Activated CD8-positive, alpha-beta T cell treated with anti-CD3 and anti-CD28 coated beads for 36 hours (primary cell): ENCODE measurements at regions of chr1 and their contacts with region 1.

Region 1: DNA sequence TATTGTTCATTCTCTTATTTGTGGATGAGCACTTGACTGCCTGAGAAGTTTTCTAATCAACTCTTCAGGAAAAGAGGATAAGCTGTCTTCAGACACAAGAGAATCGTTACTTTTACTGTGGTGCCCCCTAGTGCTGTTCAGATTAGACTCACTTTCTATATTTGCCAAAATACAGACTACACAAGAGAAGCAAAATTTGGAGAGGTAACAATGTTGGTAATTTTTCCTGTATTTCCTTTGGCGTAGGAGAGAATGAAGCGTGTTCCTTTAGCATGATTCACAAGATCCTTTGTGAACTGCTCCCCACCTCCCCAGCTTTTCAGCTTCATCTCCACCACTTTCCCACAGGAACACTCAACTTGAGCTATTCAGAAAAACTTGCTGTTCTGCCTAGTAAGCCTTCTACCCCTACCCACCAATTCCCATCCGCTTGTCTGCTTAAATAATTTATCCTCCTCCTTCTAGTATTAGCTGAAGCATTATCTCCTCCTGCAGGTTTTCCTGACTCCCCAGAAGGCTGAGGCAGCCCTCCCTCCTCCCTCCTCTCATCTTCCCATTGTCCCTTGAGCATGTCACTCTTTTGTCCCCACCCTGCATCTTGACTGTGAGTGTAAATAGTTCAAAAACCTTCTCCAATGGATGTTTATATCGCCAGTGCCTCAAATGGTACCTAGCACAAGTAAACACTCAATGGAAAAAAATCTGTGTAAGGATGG is 4.5 kb downstream of the TNFSF4 start:
- DNase-seq: peak; percentile 26
- ATAC-seq: no peak
- H3K4me3 Mint-ChIP-seq: no peak overlapping the region
- H3K27ac Mint-ChIP-seq: no peak overlapping the region
- H3K4me1 Mint-ChIP-seq: peaks cover 45% of the 10 kb centered on the region
- H3K27me3 Mint-ChIP-seq: no peaks in the 10 kb centered on the region
- CTCF ChIP-seq: peak; percentile 84

Region 2: DNA sequence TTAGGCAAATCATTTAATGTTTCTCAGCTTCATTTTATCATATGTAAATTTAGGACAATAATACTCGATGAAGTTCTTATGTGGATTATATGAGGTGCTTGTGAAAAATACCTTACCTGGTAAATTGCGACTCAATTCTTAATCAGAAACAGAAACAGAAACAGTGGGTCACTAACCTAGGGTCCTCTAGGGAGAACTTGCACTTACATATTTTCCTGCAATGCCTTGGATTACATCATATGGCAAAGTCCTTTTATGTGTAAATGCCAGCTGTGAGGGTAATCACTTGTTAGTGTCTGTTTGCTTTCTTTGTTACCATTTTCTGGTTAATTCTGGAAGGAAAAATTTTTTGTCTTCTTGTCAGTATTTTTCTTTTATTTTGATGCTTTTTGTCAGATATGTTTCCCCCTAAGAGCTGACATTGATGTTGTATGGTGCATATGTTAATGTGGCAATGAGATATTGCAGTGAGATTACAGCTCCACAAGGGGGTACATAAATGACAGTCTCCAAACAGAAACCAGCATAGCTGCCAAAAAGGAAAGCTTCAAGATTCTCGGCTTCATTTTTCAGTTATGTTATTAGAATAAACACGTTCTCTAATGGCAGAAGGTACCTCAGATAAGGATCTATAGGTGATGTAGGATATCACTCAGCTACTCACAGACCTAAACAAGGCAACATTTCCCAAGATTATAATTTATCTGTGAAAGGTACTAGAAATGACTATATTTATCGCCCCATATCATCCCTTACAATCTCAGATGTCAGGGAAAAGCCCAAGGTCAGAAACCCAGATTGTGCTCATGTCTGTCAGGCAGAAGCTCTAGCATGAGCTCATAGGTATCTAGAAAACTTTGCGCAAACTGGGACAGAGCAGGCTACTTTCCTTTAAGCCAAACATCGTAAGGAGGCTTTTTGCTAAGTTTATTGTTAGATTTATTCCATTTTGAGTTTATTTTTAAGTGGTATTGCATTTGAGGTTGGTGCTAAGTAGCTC is 423.8 kb before region 1 on chr1:
- CTCF ChIA-PET with region 1: interaction called, 21 read pairs
- POLR2A ChIA-PET with region 1: no interaction called
- intact Hi-C with region 1: no loop called
- DNase-seq: no peak
- ATAC-seq: peak; percentile 91
- H3K4me3 Mint-ChIP-seq: peak overlapping the region; percentile 24
- H3K27ac Mint-ChIP-seq: peak overlapping the region; percentile 44
- H3K4me1 Mint-ChIP-seq: peaks cover 28% of the 10 kb centered on the region
- H3K27me3 Mint-ChIP-seq: no peaks in the 10 kb centered on the region
- CTCF ChIP-seq: peak; percentile 52

Region 3: DNA sequence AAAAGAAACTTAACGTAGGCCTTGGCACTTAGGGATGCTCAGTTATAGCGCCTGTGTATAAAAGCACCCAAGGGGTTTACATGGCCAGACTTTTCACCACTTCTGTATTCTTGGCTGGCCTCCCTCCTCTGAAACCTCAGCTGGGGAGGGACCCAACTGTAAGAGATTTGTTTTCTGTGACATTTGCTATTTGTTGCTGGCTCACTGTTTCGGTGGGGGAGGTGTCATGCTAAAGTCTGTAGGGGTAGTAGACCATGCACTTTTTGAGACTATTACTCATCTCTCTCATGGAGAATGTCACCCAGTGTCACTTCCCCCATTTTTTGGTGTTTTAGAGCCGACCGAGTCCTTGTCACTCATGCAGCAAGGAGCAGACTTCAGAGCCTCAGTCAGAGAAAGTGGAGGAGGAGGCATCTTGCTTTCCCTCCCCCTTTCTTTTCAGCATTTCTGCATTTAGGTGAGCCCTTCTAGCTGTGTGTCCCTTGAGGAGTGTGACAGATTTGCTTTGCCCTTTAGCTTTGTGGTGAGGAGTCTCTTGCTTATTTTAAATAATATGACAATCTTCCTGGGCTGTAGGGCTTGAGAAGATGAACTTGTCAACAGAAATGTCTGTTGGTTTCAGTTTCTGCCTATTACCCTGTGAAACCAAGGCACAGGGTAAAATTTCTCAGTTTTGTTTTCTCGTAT is 383.6 kb before region 1 on chr1:
- CTCF ChIA-PET with region 1: interaction called, 6 read pairs
- POLR2A ChIA-PET with region 1: no interaction called
- intact Hi-C with region 1: loop called (anchors 5 kb)
- DNase-seq: peak; percentile 88
- ATAC-seq: peak; percentile 97
- H3K4me3 Mint-ChIP-seq: peak overlapping the region; percentile 43
- H3K27ac Mint-ChIP-seq: peak overlapping the region; percentile 83
- H3K4me1 Mint-ChIP-seq: peaks cover 47% of the 10 kb centered on the region
- H3K27me3 Mint-ChIP-seq: peaks cover 14% of the 10 kb centered on the region
- CTCF ChIP-seq: no peak

Region 4: DNA sequence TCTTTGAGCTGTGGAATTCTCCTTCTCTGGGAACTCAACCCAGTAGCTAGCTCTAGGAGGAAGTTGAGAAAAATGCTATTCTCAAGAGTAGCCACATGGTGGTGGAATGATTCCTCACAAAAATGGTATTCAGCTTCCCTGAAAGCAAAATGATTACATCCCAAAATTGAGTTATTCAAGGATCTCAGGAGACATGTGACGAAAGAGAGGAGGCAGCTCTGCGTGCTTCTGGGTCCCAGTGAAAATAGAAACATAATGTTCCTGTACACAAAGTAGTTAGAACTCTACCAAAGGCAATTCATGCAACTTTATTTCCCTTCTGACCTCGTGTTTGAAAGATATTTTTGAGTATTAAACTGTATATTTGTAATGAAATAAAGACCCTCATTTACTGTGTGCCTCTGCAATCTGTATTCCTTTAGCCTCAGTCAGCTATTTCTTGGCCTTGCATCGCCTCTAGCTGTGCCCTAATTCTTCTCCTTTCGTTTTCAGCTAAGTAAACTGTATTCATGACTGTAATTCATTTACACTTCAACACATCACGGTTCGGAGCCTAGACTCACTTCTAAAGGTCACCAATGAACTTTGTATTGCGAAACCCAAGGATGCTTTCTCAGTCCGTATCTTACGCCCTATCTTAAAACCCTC is 376.4 kb before region 1 on chr1:
- CTCF ChIA-PET with region 1: interaction called, 47 read pairs
- POLR2A ChIA-PET with region 1: no interaction called
- intact Hi-C with region 1: loop called (anchors 5 kb)
- DNase-seq: peak; percentile 26
- ATAC-seq: peak; percentile 61
- H3K4me3 Mint-ChIP-seq: no peak overlapping the region
- H3K27ac Mint-ChIP-seq: no peak overlapping the region
- H3K4me1 Mint-ChIP-seq: peaks cover 2% of the 10 kb centered on the region
- H3K27me3 Mint-ChIP-seq: peaks cover 9% of the 10 kb centered on the region
- CTCF ChIP-seq: peak; percentile 72

Region 5: GRCh38 chr1:172837816-172838680 is 364.5 kb before region 1 on chr1:
- CTCF ChIA-PET with region 1: interaction called, 5 read pairs
- POLR2A ChIA-PET with region 1: no interaction called
- intact Hi-C with region 1: loop called (anchors 5 kb)
- DNase-seq: peak; percentile 41
- ATAC-seq: peak; percentile 97
- H3K4me3 Mint-ChIP-seq: no peak overlapping the region
- H3K27ac Mint-ChIP-seq: no peak overlapping the region
- H3K4me1 Mint-ChIP-seq: peaks cover 34% of the 10 kb centered on the region
- H3K27me3 Mint-ChIP-seq: peaks cover 18% of the 10 kb centered on the region
- CTCF ChIP-seq: no peak

Region 6: GRCh38 chr1:173212952-173213491 is 10.4 kb after region 1 on chr1:
- CTCF ChIA-PET with region 1: interaction called, 22 read pairs
- POLR2A ChIA-PET with region 1: no interaction called
- intact Hi-C with region 1: no loop called
- DNase-seq: no peak
- ATAC-seq: peak; percentile 34
- H3K4me3 Mint-ChIP-seq: no peak overlapping the region
- H3K27ac Mint-ChIP-seq: peak overlapping the region; percentile 25
- H3K4me1 Mint-ChIP-seq: peaks cover 21% of the 10 kb centered on the region
- H3K27me3 Mint-ChIP-seq: peaks cover 6% of the 10 kb centered on the region
- CTCF ChIP-seq: no peak

Region 7: DNA sequence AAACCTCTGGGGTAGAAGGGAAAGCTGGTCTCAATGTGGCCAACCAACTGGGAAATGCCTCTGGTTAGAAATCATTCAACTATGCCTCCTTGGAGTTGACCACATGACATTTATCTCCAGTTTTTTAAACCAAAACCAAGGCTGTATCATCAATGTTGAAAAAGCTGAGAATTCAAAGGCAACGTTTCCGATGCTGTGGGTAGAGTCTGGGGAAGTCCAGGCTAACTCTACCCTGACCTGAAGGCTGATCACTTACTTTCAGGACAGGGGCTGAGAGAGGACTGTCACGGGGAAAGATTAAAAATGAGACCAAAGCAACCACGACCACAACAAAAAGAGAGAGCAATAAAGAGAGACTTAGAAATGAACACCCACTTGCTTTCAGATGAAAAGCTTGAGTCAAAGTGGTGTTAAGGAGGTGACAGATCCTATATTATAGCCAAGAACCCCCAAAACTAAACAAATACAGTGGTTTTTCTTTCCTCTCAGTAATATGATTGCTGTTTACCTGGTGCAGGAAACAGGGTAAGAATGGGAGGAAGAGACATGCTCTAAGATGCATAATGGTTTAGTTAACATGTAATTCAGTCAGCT is 95.3 kb after region 1 on chr1:
- CTCF ChIA-PET with region 1: interaction called, 3 read pairs
- POLR2A ChIA-PET with region 1: no interaction called
- intact Hi-C with region 1: loop called (anchors 10 kb)
- DNase-seq: peak; percentile 84
- ATAC-seq: peak; percentile 93
- H3K4me3 Mint-ChIP-seq: no peak overlapping the region
- H3K27ac Mint-ChIP-seq: peak overlapping the region; percentile 25
- H3K4me1 Mint-ChIP-seq: peaks cover 61% of the 10 kb centered on the region
- H3K27me3 Mint-ChIP-seq: no peaks in the 10 kb centered on the region
- CTCF ChIP-seq: no peak